Dorsolateral prefrontal cortex (tissue), 120 donors: ENCODE measurements at regions of chr3 and their contacts with region 1.

Region 1: DNA sequence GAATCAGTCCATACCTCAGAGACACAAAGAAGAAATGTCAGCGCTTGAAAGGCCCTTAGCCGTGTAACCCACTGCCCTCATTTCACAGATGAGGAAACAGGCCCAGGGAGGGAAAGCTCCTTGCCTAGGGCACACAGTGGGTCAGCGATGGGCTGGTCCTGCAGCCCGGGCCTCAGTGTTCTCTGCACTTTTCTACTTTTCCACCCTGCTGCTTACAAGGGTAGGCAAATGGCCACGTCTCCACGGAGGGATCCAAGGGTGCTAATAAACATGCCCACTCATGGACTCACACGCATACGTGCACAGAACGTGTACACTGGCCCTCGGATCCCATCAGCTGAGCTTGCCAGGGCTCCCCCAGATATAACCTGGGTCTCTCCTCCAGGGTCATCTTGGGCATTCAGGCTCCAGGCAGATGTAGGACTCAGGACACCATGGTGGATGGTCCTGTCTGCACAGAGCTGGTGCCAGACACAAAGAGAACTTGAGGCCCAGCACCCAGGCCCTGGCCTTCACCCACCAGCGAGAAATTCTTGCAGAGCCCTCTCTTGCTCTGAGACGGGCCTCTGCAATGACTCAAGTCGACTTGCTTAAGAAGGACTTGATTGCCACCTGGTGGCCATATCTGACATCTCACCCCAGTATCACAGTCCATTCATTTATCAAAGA is 34.5 kb upstream of the VPS8 start:
- DNase-seq: peak; percentile 68 to 99 (median 92)
- H3K4me3 ChIP-seq: no peak overlapping the region
- H3K27ac ChIP-seq: no peak overlapping the region
- H3K27me3 ChIP-seq: peaks cover 0 to 19% (median 0%) of the 10 kb centered on the region in 45 donors
- CTCF ChIP-seq: peak; percentile 76 to 98 (median 93)

Region 2: DNA sequence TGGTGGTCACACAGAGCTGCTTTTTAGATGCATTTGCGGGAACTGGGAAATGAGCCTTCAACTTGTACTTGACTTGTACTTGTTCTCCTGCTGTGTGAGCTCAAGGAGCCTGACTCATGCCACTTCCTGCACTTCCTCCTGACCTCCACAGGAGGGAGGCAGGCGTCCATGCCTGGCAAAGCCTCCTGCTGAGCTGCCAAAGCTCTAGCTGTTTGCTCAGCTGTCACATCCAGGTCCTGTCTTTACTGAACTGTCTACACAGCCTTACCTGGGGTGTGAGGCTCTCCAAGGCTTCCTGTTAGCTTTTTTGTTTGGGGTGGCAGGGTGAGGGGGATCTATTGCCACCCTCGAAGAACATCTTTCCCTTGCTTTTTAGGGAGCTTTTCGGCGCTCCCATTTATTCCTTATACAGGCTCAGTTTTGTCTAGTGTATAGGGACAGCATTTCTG is 405.9 kb before region 1 on chr3:
- intact Hi-C with region 1: loop called in 1 of 2 experiments (anchors 5 kb)
- DNase-seq: peak in 9 of 10 donors; percentile 65 to 87 (median 83)
- H3K4me3 ChIP-seq: no peak overlapping the region
- H3K27ac ChIP-seq: peak overlapping the region in 38 of 59 donors; percentile 0 to 66 (median 36)
- H3K27me3 ChIP-seq: no peaks in the 10 kb centered on the region
- CTCF ChIP-seq: peak; percentile 52 to 98 (median 90)

Region 3: DNA sequence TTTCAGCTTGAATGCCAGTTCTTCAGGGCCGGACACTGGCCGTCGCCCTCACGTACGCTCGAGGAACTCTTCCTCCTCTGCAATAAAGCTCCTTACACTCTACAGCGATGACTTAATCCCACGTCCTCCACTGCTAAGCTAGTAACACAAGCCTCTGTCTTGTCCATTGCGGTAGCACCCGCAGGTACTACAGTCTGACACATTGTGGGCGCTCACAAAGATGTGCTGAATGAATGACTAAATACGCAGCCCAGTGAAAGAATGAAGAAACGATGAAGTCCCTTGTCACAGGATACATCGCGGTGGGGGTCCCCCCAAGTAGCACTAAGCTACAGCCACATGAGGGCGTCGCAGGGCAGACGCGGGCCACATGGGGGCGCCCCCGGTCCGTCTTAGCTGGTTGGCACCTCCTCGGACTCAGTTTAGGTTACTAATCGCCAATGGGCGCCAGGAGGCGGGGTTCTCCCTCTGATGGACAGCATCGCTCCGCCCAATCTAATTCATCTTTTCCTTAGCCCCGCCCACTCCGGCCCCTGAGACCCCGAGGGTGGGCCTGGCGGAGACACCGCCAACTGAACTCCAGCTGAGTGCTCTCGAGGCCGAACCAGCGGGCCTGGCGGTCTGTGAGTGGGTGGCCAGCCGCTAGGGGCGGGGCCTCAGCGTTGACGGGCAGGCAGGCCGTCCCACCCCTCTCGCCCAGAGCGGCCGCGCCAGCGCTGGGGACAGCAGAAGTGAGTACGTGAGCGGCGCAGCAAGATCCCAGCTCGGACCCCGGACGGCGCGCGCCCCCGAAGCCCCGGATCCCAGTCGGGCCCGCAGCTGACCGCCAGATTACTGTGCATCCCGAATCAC is 216.2 kb before region 1 on chr3 and contains the start of gene EPHB3:
- intact Hi-C with region 1: loop called in 1 of 2 experiments (anchors 1 kb)
- DNase-seq: peak; percentile 99 to 100 (median 99)
- H3K4me3 ChIP-seq: peak within 1 kb of the TSS; percentile 48 to 81 (median 70)
- H3K27ac ChIP-seq: peak within 1 kb of the TSS in 52 of 59 donors; percentile 7 to 90 (median 64)
- H3K27me3 ChIP-seq: no peaks in the 10 kb centered on the region
- CTCF ChIP-seq: peak; percentile 83 to 100 (median 100)
- total RNA-seq, gene EPHB3: 3.4 to 13.0 (median 7.1) TPM

Region 4: DNA sequence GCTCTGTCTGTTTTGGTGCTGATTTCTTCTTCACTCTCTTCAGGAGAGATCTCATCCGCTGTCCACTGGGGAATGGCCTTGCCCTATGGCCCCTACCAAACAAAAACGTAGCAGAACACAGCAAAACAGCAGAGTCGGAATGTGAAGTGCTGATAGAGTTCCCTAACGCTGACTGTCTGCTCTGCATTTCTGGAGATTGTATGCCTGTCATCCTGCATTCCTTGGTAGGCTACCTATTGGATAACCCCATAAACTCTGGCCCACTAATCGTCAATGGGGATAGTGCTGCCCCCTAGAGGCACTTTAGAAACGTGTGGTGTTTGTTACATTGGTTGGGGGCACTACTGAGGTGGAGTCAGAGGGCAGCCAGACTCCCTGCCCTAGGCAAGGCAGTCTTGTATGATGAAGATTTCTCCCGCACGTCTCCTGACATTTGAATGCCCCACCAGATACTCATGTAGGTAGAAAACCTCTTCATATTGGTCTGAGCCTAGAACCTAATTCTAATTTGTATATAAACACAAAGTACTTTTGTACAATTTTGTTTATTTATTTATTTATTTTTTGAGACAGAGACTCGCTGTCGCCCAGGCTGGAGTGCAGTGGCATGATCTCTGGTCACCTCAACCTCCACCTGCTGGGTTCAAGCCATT is 50.0 kb before region 1 on chr3:
- intact Hi-C with region 1: loop called in 1 of 2 experiments (anchors 5 kb)
- DNase-seq: peak in 4 of 10 donors; percentile 29 to 53 (median 45)
- H3K4me3 ChIP-seq: no peak overlapping the region
- H3K27ac ChIP-seq: no peak overlapping the region
- H3K27me3 ChIP-seq: no peaks in the 10 kb centered on the region
- CTCF ChIP-seq: peak; percentile 22 to 81 (median 70)

Region 5: GRCh38 chr3:185335799-185336198 is 558.3 kb after region 1 on chr3:
- intact Hi-C with region 1: no loop called
- DNase-seq: no peak
- H3K4me3 ChIP-seq: no peak overlapping the region
- H3K27ac ChIP-seq: no peak overlapping the region
- H3K27me3 ChIP-seq: no peaks in the 10 kb centered on the region
- CTCF ChIP-seq: no peak